Heart right ventricle (tissue), 16 donors: ENCODE measurements at regions of chr11 and their contacts with region 1.

Region 1: GRCh38 chr11:62601394-62602140 is at the start of gene MTA2:
- DNase-seq: peak; percentile 98
- ATAC-seq: peak; percentile 88 to 95 (median 90)
- H3K4me3 ChIP-seq: peak within 1 kb of the TSS; percentile 34 to 100 (median 95)
- H3K27ac ChIP-seq: peak within 1 kb of the TSS; percentile 84 to 99 (median 97)
- H3K4me1 ChIP-seq: peaks cover 17 to 48% (median 43%) of the 10 kb centered on the region in 9 donors
- H3K27me3 ChIP-seq: no peaks in the 10 kb centered on the region
- CTCF ChIP-seq: no peak
- total RNA-seq, gene MTA2: 25.0 to 45.3 (median 29.8) TPM

Region 2: DNA sequence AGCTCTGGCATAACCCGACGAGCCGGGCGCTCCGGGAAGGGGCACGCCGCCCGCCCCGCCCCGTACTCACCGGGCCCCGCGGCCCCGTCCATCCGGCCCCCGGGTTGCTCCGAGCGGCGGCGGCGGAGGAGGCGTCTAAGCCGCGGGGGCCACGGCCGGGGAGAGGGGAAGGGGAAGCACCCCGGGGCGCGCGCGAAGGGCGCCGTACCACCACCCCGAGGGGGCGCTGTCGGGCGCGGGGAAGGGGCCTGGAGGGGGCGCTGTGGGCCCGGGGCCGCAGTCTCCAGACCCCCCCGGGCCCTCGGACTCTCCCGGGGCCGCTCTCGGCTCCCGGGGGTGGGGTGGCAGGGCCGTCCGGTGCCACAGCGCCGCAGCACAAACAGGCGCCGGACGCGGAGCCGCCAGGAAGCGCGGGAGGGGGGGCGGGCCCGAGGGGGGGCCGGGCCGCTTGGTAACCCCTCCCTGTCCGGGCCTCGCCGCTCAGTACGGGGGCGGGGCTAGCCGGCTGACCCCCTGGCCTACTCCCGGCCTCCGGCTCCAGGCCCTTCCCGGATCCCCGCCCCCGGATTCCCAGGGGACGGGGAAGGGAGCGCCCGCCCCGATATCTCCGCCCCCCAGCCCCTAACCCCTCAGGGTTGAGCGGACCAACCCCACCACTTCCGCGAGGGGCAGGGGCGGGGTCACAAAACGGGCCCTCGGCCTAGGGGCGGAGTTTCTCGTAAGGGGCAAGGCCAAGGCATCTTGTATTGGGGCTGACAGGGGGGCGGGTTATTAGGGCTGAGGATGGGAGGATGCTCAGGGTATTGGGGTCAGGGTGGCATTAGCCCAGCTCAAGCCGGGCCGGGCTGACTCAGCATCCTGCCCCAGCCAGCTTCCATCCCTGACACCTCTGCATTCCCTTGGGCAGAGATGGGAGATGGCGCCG is 11.1 kb after region 1 on chr11 and contains the starts of genes EML3 and ROM1:
- intact Hi-C with region 1: loop called in 1 of 10 experiments (anchors 1 kb)
- DNase-seq: peak; percentile 92 to 93
- ATAC-seq: peak; percentile 87 to 94 (median 90)
- H3K4me3 ChIP-seq: peak within 1 kb of the TSS; percentile 65 to 93 (median 76)
- H3K27ac ChIP-seq: peak within 1 kb of the TSS; percentile 91 to 98 (median 96)
- H3K4me1 ChIP-seq: peaks cover 9 to 42% (median 27%) of the 10 kb centered on the region in 9 donors
- H3K27me3 ChIP-seq: no peaks in the 10 kb centered on the region
- CTCF ChIP-seq: peak; percentile 81 to 98 (median 92)
- total RNA-seq, gene EML3: 7.7 to 27.2 (median 15.2) TPM
- total RNA-seq, gene ROM1: 0.81 to 4.4 (median 1.8) TPM

Region 3: DNA sequence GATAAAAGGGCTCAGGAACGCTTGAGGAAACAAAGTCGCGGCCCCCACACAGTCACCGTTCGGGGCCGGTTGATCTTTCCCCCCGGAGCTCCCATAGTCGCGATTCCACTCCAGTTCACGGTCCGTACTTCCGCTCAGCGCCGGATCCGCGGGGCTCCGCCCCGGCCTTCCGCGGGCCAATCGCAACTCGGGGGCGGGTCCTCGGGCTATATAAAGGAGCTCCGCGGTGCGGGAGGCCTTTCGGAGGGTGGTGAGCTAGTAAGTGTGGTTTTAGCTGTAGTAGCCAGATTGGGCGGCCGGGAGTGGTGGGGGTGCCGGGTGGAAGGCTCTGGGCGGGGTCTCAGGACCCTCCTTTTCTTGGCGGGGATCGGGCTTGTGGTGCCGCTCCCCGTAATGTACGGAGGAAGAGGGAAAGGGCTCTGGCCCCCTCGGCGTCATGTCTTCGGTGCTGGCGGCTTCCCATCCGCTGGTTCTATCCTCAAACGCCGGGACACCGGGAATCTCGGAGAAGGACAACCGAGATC is 63.6 kb after region 1 on chr11 and contains the starts of genes C11orf98 and CSKMT:
- intact Hi-C with region 1: loop called in 2 of 10 experiments (anchors 5 kb)
- DNase-seq: peak; percentile 94 to 95
- ATAC-seq: peak; percentile 96 to 99 (median 98)
- H3K4me3 ChIP-seq: peak within 1 kb of the TSS; percentile 59 to 95 (median 80)
- H3K27ac ChIP-seq: peak within 1 kb of the TSS; percentile 80 to 94 (median 91)
- H3K4me1 ChIP-seq: peaks cover 16 to 49% (median 37%) of the 10 kb centered on the region in 9 donors
- H3K27me3 ChIP-seq: no peaks in the 10 kb centered on the region
- CTCF ChIP-seq: no peak
- total RNA-seq, gene C11orf98: 25.8 to 41.5 (median 30.0) TPM
- total RNA-seq, gene CSKMT: 2.4 to 7.7 (median 4.2) TPM

Region 4: GRCh38 chr11:62726915-62727763 is 125.6 kb after region 1 on chr11 and contains the start of gene HNRNPUL2:
- intact Hi-C with region 1: no loop called
- DNase-seq: peak; percentile 98 to 99
- ATAC-seq: peak; percentile 93 to 97 (median 94)
- H3K4me3 ChIP-seq: peak within 1 kb of the TSS; percentile 63 to 98 (median 89)
- H3K27ac ChIP-seq: peak within 1 kb of the TSS; percentile 87 to 99 (median 93)
- H3K4me1 ChIP-seq: peaks cover 12 to 69% (median 49%) of the 10 kb centered on the region in 9 donors
- H3K27me3 ChIP-seq: no peaks in the 10 kb centered on the region
- CTCF ChIP-seq: peak in 3 of 9 donors; percentile 16 to 32 (median 19)
- total RNA-seq, gene HNRNPUL2: 26.9 to 40.9 (median 33.4) TPM

Region 5: DNA sequence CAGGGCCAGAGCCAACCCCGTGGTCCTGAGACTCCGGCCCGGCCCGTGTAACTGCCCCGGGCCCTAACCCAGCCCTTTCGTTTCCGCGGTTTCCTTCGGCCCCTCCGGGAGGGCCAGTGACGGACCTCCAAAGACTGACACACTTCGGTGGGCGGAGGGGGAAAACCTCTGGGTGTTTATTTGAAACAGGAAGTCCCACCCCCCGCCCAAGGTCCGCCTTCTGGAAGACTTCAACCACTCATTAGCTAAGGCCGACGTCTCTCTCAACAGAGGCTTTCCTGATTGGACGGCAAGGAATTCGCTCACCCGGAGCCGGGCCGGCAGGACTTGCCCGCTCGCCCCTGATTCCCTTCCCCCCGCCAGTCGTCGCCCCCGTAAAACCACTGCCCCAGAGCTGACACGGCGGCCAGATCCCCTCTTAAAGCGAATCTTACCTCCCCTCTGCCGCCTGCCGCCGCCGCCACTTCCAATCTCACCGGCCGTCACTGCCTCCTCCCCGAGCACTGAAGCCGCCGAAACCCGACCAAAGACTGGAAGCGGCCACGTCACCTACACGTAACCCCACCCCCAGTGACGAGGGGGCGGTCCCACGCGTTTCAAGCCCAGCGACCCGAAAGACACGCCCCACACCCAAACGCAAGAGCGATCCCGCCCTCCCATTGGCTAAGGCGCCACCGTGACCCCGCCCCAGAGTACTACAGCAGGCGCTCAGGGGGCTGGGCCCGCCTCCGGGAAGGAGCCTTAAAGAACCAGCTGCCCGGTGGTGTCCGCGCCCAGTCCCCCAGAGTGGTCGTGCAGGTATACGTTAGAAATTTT is 230.2 kb after region 1 on chr11 and contains the start of gene STX5:
- intact Hi-C with region 1: loop called in 1 of 10 experiments (anchors 10 kb)
- DNase-seq: peak; percentile 99 to 100
- ATAC-seq: peak; percentile 98 to 99 (median 98)
- H3K4me3 ChIP-seq: peak within 1 kb of the TSS; percentile 65 to 99 (median 88)
- H3K27ac ChIP-seq: peak within 1 kb of the TSS; percentile 82 to 97 (median 94)
- H3K4me1 ChIP-seq: peaks cover 8 to 49% (median 44%) of the 10 kb centered on the region in 9 donors
- H3K27me3 ChIP-seq: no peaks in the 10 kb centered on the region
- CTCF ChIP-seq: no peak
- total RNA-seq, gene STX5: 16.8 to 27.0 (median 19.0) TPM